CD4-positive, alpha-beta memory T cell (primary cell): ENCODE measurements at regions of chr1 and their contacts with region 1.

Region 1: GRCh38 chr1:179809506-179810366 is 66.6 kb downstream of the FAM163A start:
- DNase-seq: peak; percentile 70 to 74 (median 71)
- H3K4me3 ChIP-seq: no peak overlapping the region
- H3K4me3 Mint-ChIP-seq: peak overlapping the region in 1 of 8 donors; percentile 46
- H3K27ac ChIP-seq: no peak overlapping the region
- H3K27ac Mint-ChIP-seq: peak overlapping the region in 6 of 7 donors; percentile 0 to 48 (median 5)
- H3K4me1 ChIP-seq: peaks cover 14% of the 10 kb centered on the region
- H3K4me1 Mint-ChIP-seq: peaks cover 8 to 12% (median 11%) of the 10 kb centered on the region in 4 donors
- H3K27me3 ChIP-seq: no peaks in the 10 kb centered on the region
- H3K27me3 Mint-ChIP-seq: peaks cover 0 to 3% of the 10 kb centered on the region in 2 donors

Region 2: GRCh38 chr1:179251675-179252074 is 558.1 kb before region 1 on chr1:
- CTCF ChIA-PET with region 1: interaction called, 13 read pairs
- POLR2A ChIA-PET with region 1: no interaction called
- intact Hi-C with region 1: no loop called
- DNase-seq: peak in 4 of 5 donors; percentile 5 to 16 (median 11)
- H3K4me3 ChIP-seq: no peak overlapping the region
- H3K4me3 Mint-ChIP-seq: no peak overlapping the region
- H3K27ac ChIP-seq: no peak overlapping the region
- H3K27ac Mint-ChIP-seq: no peak overlapping the region
- H3K4me1 ChIP-seq: no peaks in the 10 kb centered on the region
- H3K4me1 Mint-ChIP-seq: no peaks in the 10 kb centered on the region
- H3K27me3 ChIP-seq: peaks cover 2% of the 10 kb centered on the region
- H3K27me3 Mint-ChIP-seq: no peaks in the 10 kb centered on the region

Region 3: DNA sequence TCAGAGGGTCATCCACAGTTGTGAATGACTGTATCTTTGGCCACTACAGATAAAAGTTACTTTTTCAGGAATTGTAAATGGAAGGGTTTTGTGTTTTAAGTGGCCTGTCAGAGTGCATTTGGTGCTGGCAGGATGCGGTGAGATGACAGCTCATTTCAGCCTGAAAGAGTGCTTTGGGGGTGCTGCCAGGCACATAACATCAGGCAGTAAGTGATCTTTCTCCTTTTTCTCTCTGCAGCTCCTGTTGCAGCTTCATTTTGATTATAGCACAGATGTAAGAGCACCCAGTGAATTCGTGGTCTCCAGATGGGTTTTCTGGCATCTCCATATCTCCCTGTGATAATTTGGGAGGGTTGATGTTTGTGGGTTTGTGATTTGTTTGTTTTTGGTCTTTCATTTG is 81.5 kb before region 1 on chr1:
- CTCF ChIA-PET with region 1: interaction called, 10 read pairs
- POLR2A ChIA-PET with region 1: no interaction called
- intact Hi-C with region 1: no loop called
- DNase-seq: no peak
- H3K4me3 ChIP-seq: no peak overlapping the region
- H3K4me3 Mint-ChIP-seq: no peak overlapping the region
- H3K27ac ChIP-seq: no peak overlapping the region
- H3K27ac Mint-ChIP-seq: no peak overlapping the region
- H3K4me1 ChIP-seq: no peaks in the 10 kb centered on the region
- H3K4me1 Mint-ChIP-seq: no peaks in the 10 kb centered on the region
- H3K27me3 ChIP-seq: no peaks in the 10 kb centered on the region
- H3K27me3 Mint-ChIP-seq: peaks cover 14 to 16% of the 10 kb centered on the region in 2 donors

Region 4: DNA sequence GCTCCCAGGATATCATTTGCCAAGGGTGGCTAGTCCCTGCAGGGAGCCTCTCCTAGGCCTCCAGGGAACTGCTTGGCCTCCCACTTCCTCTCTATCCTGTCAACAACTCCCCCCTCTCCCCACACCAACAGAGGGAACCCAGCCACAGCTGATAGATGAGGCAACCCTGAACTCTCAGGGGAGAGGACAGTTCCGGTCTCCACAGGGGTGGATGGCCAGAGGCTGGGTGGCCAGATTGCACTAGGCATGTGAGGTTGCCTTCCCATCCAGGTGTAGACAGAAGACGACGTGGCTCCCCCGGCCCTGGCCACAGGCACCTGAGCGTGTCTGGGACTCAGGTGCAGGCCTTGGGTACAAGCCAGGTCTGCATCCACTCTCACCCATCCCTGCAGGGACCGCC is 14.5 kb after region 1 on chr1:
- CTCF ChIA-PET with region 1: interaction called, 101 read pairs
- POLR2A ChIA-PET with region 1: interaction called, 5 read pairs
- intact Hi-C with region 1: no loop called
- DNase-seq: no peak
- H3K4me3 ChIP-seq: no peak overlapping the region
- H3K4me3 Mint-ChIP-seq: no peak overlapping the region
- H3K27ac ChIP-seq: no peak overlapping the region
- H3K27ac Mint-ChIP-seq: no peak overlapping the region
- H3K4me1 ChIP-seq: no peaks in the 10 kb centered on the region
- H3K4me1 Mint-ChIP-seq: no peaks in the 10 kb centered on the region
- H3K27me3 ChIP-seq: no peaks in the 10 kb centered on the region
- H3K27me3 Mint-ChIP-seq: no peaks in the 10 kb centered on the region

Region 5: DNA sequence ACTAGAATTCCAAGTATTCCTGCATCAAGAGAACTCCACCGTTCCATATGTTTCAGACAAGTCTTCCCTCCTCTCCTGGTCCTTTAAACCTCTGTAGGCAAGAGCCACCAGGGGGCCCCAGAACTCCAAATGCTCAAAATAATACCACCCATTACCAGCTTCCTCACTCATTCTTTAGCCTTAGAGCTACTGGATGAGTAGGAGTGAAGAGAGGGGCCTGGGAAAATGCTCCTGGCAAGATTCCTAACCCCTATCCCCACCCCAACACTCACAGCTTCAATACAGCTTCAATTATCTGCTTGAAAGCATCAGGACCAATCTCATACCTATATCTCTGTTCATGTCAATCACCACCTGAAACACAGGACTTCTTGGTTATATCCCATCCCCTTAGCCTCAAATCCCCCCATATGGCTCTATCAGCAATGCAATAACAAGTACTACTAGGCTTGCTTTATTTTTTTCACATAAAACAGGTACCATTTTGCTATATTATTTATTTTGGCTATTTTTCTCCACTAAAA is 58.1 kb after region 1 on chr1:
- CTCF ChIA-PET with region 1: interaction called, 13 read pairs
- POLR2A ChIA-PET with region 1: no interaction called
- intact Hi-C with region 1: no loop called
- DNase-seq: peak; percentile 42 to 54 (median 53)
- H3K4me3 ChIP-seq: no peak overlapping the region
- H3K4me3 Mint-ChIP-seq: no peak overlapping the region
- H3K27ac ChIP-seq: no peak overlapping the region
- H3K27ac Mint-ChIP-seq: peak overlapping the region in 4 of 7 donors; percentile 10 to 33 (median 14)
- H3K4me1 ChIP-seq: peaks cover 17% of the 10 kb centered on the region
- H3K4me1 Mint-ChIP-seq: peaks cover 13 to 22% (median 19%) of the 10 kb centered on the region in 4 donors
- H3K27me3 ChIP-seq: no peaks in the 10 kb centered on the region
- H3K27me3 Mint-ChIP-seq: no peaks in the 10 kb centered on the region

Region 6: DNA sequence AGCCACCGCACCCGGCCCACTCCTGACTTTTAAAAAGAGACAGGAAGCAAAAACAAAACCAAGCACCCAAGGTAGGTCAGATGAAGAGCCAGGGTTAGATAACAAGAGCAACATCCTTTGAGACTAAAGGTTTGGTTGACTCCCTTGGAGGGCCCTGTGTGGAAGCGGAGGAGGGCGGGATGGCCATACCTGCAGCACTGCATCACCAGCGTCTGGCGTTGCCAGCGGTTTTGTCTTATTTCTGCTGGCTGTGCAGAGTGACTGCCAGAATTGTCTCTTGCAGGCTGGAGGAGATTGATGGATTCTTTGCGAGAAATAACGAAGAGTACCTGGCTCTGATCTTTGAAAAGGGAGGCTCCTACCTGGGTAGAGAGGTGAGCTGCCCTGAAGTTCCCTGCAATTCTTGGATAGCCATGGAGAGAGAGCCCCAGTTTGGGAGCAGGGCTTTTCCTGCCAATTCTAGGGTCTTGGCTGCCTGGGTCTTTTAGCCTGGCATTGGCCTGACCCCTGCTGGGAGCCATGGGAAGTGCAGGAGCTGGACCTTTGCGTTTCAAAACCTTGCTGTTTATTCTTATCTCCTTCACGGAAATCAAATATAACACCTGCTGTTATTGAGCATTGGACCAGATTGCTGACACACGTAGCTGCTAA is 368.9 kb after region 1 on chr1:
- CTCF ChIA-PET with region 1: interaction called, 21 read pairs
- POLR2A ChIA-PET with region 1: interaction called, 4 read pairs
- intact Hi-C with region 1: no loop called
- DNase-seq: peak; percentile 50 to 63 (median 53)
- H3K4me3 ChIP-seq: no peak overlapping the region
- H3K4me3 Mint-ChIP-seq: no peak overlapping the region
- H3K27ac ChIP-seq: no peak overlapping the region
- H3K27ac Mint-ChIP-seq: peak overlapping the region in 3 of 7 donors; percentile 38 to 86 (median 47)
- H3K4me1 ChIP-seq: no peaks in the 10 kb centered on the region
- H3K4me1 Mint-ChIP-seq: peaks cover 0 to 4% (median 0%) of the 10 kb centered on the region in 4 donors
- H3K27me3 ChIP-seq: no peaks in the 10 kb centered on the region
- H3K27me3 Mint-ChIP-seq: no peaks in the 10 kb centered on the region

Region 7: DNA sequence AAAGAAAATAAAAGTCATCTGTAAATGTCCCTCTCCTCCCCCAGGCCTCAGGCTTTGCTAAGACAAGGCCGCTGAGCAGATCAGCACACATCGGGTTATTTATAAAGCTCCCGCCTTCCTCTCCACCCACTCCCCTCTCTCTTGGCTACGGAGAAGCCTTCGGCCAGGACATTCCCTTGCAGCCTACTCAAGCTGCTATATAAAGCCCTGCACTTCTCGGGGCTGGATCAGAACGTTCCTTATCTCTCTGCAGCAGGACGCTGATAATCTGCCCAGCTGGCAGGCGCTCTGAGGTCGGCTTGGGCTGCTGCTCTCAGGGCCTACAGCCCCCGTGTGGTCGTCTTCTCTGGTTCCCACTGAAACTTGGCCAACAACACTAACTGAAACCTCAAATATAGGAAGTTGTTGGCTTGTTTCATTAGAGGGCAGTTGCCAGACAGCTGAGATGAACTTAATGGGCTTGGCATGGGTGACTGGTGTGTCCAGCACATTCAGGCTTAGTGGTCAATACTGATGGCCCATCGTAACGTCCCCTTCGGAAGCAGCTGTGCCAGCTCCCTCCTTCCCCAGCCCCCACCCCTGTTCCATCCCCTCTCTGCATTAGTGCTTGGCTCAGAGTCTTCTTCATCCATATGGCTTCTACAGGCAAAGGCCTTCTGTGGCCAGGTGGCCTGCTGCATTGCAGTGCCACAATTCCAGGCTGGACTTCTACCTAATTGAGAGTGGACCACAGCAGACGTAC is 1343.3 kb after region 1 on chr1:
- CTCF ChIA-PET with region 1: no interaction called
- POLR2A ChIA-PET with region 1: no interaction called
- intact Hi-C with region 1: no loop called
- DNase-seq: no peak
- H3K4me3 ChIP-seq: no peak overlapping the region
- H3K4me3 Mint-ChIP-seq: no peak overlapping the region
- H3K27ac ChIP-seq: no peak overlapping the region
- H3K27ac Mint-ChIP-seq: peak overlapping the region in 2 of 7 donors; percentile 23 to 62
- H3K4me1 ChIP-seq: peaks cover 56% of the 10 kb centered on the region
- H3K4me1 Mint-ChIP-seq: peaks cover 37 to 61% (median 49%) of the 10 kb centered on the region in 4 donors
- H3K27me3 ChIP-seq: no peaks in the 10 kb centered on the region
- H3K27me3 Mint-ChIP-seq: no peaks in the 10 kb centered on the region